AG04449 (cell line): ENCODE measurements at regions of chr1 and their contacts with region 1.

Region 1: GRCh38 chr1:209248649-209249279 is 334.8 kb upstream of the CAMK1G start:
- DNase-seq: no peak
- H3K4me3 ChIP-seq: no peak overlapping the region
- CTCF ChIP-seq: peak; percentile 68

Region 2: GRCh38 chr1:209238356-209238755 is 10.4 kb before region 1 on chr1:
- CTCF ChIA-PET with region 1: interaction called, 51 read pairs
- POLR2A ChIA-PET with region 1: no interaction called
- DNase-seq: no peak
- H3K4me3 ChIP-seq: no peak overlapping the region
- CTCF ChIP-seq: no peak

Region 3: DNA sequence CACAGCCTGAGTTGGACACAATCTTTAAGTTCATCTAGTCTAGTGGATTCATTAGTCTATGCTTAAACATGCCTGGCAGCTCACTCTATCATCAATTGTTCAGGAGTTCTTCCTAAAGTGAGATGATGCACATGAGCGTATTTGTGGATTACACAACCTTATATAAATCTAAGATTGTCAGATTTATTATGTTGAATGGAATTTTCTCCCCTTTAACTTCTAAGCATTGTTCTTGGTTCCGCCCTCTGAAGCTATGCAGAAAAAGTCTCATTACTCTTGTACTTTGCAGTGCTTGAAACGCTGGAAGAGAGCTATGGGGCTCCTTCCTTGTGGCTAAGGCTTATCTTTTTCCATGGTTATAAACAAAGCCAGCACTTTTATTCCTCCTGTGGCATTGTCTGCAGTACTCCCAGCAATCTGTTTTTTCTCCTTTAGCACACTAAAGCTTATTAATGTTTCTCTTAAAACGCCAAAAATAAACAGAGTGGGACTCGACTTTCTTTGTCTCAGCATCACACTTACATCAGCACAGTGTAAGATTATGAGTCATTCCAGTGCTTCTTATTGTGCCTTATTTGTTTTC is 17.9 kb after region 1 on chr1:
- CTCF ChIA-PET with region 1: interaction called, 58 read pairs
- POLR2A ChIA-PET with region 1: no interaction called
- DNase-seq: no peak
- H3K4me3 ChIP-seq: no peak overlapping the region
- CTCF ChIP-seq: no peak

Region 4: DNA sequence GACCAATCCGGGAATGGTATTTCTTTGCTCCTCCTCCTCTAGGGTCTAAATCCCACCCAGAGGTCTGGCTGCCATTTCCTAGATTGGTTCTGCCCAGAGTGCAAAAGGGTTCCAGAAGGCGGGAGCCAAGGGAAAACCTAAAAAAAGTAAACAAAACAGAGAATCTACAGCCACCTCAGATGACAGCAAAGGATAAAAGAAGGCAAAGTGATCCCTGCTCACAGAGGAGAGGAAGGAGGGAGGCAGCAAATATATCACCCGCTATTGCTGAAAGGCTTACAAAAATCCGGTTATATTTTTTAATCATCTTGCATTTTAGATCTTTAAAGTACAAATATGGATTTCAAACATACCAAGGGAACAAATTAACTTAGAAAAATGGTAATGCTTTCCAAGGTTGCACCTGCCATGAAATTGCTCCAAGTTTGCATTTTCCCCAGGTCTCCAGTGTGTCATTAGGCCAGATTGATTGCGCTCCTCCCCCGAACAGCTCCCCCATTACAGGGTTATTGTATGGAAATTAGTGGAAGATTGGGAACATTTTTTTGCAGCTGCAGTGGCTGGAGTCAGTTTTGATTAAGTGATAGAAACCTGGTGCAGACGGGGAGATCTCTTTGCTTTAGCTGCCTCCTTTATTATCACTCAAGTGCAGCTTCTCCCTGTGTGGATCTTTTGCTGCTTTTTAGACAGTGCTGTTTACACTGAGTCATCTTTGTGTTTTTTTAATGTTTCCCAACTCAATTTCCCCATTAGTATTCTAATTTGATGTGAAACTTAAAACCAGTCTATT is 54.2 kb after region 1 on chr1:
- CTCF ChIA-PET with region 1: interaction called, 20 read pairs
- POLR2A ChIA-PET with region 1: no interaction called
- DNase-seq: no peak
- H3K4me3 ChIP-seq: no peak overlapping the region
- CTCF ChIP-seq: no peak

Region 5: DNA sequence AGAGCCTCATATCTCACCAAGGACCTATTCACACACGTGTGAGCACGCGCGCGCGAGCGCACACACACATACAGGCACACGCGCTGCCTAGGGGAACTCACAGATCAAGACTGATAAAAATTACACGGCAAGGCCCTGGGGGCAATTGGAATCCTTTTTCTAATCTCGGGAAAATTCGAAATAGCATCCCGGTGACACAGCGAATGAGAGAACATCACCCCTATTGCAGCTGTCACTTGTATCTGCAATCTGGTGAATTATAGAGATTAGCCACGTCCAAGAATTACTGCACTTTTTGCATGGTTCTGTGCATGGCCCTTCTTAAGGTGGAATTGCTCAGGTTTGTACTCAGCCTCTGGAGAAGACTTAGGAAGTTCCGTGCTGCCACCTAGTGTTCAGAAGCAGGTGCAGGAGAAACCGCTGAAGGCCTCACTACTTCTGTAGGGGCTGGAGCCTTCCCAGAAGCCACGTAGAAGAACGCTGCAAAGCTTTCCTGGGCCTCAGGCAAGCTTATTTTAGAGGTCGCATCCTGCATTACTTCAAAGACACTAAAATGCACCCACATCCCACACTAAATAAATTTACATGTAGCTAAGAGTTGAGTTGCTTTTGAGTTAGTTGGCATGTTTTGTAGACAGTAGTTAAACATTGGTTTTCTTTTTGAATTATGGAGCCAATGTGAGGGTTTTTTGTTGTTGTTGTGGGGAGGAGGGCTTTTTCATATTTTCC is 105.5 kb after region 1 on chr1:
- CTCF ChIA-PET with region 1: interaction called, 25 read pairs
- POLR2A ChIA-PET with region 1: no interaction called
- DNase-seq: peak; percentile 82
- H3K4me3 ChIP-seq: no peak overlapping the region
- CTCF ChIP-seq: peak; percentile 92

Region 6: GRCh38 chr1:209513226-209513625 is 264.5 kb after region 1 on chr1:
- CTCF ChIA-PET with region 1: interaction called, 13 read pairs
- POLR2A ChIA-PET with region 1: no interaction called
- DNase-seq: no peak
- H3K4me3 ChIP-seq: no peak overlapping the region
- CTCF ChIP-seq: peak; percentile 63